A673 (cell line): ENCODE measurements at regions of chr1 and their contacts with region 1.

Region 1: GRCh38 chr1:161225534-161226319 is at the start of gene TOMM40L:
- DNase-seq: peak; percentile 100
- H3K4me3 ChIP-seq: peak within 1 kb of the TSS; percentile 78
- H3K27ac ChIP-seq: peak within 1 kb of the TSS; percentile 68
- H3K4me1 ChIP-seq: peaks cover 18% of the 10 kb centered on the region
- H3K27me3 ChIP-seq: no peaks in the 10 kb centered on the region
- CTCF ChIP-seq: peak; percentile 79
- total RNA-seq, gene TOMM40L: 14.0 TPM in 2 replicates

Region 2: DNA sequence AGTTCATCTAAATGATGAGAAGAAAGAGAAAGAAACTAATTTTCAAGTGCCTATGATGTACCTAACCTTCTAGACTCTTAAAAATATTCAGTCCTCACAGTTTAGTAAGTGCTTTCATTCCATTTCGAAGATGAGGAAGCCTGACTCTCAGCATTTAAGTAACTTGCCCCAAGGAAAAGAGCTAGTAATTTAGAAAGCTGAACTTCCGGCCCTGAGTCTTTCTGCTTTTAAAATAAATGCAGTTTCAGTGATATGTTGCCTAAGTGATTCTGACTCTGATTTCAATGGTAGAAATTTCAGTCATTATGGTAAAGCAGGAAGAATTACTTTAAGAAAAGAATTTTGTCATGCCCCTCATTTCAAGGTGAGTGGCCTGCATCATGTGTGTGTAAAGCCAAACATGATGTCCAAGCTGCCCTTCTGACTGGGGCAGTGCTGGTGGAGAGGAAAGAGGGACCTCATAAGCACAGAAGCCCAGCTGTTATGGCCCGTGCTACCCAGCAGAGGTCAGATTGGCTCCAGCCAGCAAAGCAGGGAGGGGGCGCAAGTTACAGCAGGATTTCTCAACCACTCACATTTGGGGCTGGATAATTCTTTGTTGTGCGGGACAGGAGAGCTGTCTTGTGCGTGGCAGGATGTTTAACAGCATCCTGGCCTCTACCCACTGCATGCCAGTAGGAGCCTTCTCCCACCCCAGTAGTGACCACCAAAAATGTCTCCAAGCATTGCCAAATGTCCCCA is 1063.6 kb before region 1 on chr1:
- CTCF ChIA-PET with region 1: no interaction called
- POLR2A ChIA-PET with region 1: no interaction called
- intact Hi-C with region 1: no loop called
- DNase-seq: no peak
- H3K4me3 ChIP-seq: no peak overlapping the region
- H3K27ac ChIP-seq: no peak overlapping the region
- H3K4me1 ChIP-seq: no peaks in the 10 kb centered on the region
- H3K27me3 ChIP-seq: no peaks in the 10 kb centered on the region
- CTCF ChIP-seq: no peak

Region 3: DNA sequence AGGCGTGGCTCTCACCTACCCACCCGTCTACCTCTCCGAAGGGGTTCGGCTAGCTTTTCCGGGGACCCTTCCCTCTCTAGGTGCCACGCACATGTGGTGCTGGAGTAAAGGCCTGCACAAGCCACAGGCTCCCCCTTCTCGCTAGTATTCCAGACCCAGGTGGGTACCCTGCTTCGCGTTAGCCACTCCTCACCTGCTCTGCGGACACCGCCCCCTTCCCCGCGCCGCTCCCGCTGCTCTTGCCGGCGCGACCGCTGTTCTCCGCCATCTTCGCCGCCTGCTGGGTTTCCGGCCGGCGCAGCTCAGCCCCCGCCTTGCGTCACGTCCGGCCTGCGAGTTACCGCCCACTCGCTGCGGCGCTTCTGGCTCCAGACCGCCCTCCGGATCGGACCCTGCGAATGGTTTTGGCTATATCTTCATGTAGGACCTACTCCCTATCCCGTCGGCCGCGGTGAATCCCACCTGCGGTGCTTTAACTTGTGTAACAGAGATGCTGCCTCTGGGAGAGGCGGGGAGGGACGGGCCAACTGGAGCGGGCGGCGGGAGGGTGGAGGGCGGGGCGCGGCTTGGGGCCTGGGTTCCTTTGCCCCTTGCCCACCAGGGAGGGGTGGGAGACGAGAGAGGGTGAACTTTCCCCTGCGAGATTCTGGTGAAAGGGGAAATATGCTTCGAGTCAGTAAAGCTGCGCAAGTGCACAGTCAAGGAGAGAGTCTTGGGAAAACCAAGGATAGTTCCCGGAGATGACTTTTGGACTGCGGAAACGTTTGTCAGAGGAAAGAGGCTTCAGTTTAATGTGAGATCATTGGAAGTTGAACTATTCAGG is 107.8 kb before region 1 on chr1 and contains the starts of genes NIT1 and PFDN2:
- CTCF ChIA-PET with region 1: interaction called, 15 read pairs
- POLR2A ChIA-PET with region 1: no interaction called
- intact Hi-C with region 1: no loop called
- DNase-seq: peak; percentile 93
- H3K4me3 ChIP-seq: peak within 1 kb of the TSS; percentile 86
- H3K27ac ChIP-seq: peak within 1 kb of the TSS; percentile 93
- H3K4me1 ChIP-seq: peaks cover 12% of the 10 kb centered on the region
- H3K27me3 ChIP-seq: no peaks in the 10 kb centered on the region
- CTCF ChIP-seq: no peak
- total RNA-seq, gene NIT1: 29.3 and 40.3 TPM in 2 replicates
- total RNA-seq, gene PFDN2: 131 and 133 TPM in 2 replicates

Region 4: GRCh38 chr1:161172776-161173376 is 52.9 kb before region 1 on chr1:
- CTCF ChIA-PET with region 1: no interaction called
- POLR2A ChIA-PET with region 1: no interaction called
- intact Hi-C with region 1: no loop called
- DNase-seq: no peak
- H3K4me3 ChIP-seq: no peak overlapping the region
- H3K27ac ChIP-seq: no peak overlapping the region
- H3K4me1 ChIP-seq: peaks cover 13% of the 10 kb centered on the region
- H3K27me3 ChIP-seq: no peaks in the 10 kb centered on the region
- CTCF ChIP-seq: no peak

Region 5: DNA sequence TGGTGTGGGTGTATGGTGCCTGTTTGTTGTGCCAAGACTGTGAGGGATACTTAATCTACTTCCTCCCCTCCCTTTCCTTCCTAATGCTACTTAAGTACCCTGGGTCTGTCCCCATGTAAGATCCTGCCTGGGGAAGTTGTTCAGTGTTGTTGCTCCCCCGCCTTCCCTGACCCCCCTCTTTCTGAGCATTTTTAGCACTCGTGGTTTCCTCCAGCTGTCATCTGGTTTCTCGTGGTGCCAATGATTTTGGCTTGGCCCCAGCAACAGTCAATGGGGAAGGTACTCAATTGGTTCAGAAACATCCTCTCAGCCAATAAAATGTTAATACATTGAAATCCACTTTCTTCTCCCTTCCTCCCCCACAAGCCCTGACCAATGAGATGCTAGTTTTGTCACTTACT is 40.4 kb before region 1 on chr1:
- CTCF ChIA-PET with region 1: interaction called, 7 read pairs
- POLR2A ChIA-PET with region 1: interaction called, 12 read pairs
- intact Hi-C with region 1: no loop called
- DNase-seq: peak; percentile 85
- H3K4me3 ChIP-seq: no peak overlapping the region
- H3K27ac ChIP-seq: peak overlapping the region; percentile 45
- H3K4me1 ChIP-seq: peaks cover 13% of the 10 kb centered on the region
- H3K27me3 ChIP-seq: no peaks in the 10 kb centered on the region
- CTCF ChIP-seq: no peak

Region 6: DNA sequence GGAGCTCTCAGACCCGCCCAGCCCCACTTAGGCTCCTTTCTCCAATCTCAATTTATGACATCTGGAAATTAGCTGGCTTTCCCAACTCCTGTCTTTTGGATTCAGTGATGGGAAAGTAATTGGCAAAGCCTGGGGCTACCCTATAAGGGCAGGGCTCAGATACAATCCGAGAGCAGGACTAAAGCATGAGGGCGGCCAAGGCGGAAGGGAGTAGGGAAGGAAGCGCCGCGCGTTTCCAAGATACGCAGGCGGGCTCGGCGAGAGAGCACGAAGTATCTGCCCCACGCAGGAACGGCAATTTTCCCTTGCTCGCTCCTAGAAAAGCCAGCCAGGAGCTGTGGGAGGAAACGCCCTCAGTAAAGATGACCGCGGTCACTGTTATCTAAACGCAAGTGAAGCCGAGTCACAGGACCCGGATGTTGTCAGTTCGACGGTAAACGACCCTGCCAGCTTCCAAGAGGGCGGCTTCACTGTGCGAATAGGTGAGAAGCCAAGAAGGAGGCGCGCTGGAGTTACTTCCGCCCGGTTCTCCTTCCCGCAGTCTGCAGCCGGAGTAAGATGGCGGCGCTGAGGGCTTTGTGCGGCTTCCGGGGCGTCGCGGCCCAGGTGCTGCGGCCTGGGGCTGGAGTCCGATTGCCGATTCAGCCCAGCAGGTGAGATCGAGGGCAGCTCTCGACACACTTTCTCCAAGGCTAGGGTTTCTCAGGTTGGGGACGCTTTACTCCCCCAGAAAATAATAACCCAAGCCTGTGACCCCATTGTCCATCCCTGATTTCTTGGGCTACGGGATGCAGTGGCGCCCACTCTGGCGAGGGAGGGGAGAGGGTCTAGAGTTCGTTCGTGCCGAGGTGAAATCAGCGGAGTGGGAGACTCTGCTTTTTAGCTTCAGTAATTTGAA is 23.6 kb before region 1 on chr1 and contains the start of gene NDUFS2:
- CTCF ChIA-PET with region 1: interaction called, 14 read pairs
- POLR2A ChIA-PET with region 1: interaction called, 10 read pairs
- intact Hi-C with region 1: no loop called
- DNase-seq: peak; percentile 100
- H3K4me3 ChIP-seq: peak within 1 kb of the TSS; percentile 92
- H3K27ac ChIP-seq: peak within 1 kb of the TSS; percentile 87
- H3K4me1 ChIP-seq: peaks cover 39% of the 10 kb centered on the region
- H3K27me3 ChIP-seq: no peaks in the 10 kb centered on the region
- CTCF ChIP-seq: peak; percentile 48
- total RNA-seq, gene NDUFS2: 123 and 133 TPM in 2 replicates

Region 7: GRCh38 chr1:161374373-161374772 is 148.6 kb after region 1 on chr1:
- CTCF ChIA-PET with region 1: interaction called, 15 read pairs
- POLR2A ChIA-PET with region 1: no interaction called
- intact Hi-C with region 1: no loop called
- DNase-seq: peak; percentile 39
- H3K4me3 ChIP-seq: no peak overlapping the region
- H3K27ac ChIP-seq: no peak overlapping the region
- H3K4me1 ChIP-seq: no peaks in the 10 kb centered on the region
- H3K27me3 ChIP-seq: no peaks in the 10 kb centered on the region
- CTCF ChIP-seq: peak; percentile 49